ENCODE measurements at regions of chr3 and their contacts with region 1.

Region 1: DNA sequence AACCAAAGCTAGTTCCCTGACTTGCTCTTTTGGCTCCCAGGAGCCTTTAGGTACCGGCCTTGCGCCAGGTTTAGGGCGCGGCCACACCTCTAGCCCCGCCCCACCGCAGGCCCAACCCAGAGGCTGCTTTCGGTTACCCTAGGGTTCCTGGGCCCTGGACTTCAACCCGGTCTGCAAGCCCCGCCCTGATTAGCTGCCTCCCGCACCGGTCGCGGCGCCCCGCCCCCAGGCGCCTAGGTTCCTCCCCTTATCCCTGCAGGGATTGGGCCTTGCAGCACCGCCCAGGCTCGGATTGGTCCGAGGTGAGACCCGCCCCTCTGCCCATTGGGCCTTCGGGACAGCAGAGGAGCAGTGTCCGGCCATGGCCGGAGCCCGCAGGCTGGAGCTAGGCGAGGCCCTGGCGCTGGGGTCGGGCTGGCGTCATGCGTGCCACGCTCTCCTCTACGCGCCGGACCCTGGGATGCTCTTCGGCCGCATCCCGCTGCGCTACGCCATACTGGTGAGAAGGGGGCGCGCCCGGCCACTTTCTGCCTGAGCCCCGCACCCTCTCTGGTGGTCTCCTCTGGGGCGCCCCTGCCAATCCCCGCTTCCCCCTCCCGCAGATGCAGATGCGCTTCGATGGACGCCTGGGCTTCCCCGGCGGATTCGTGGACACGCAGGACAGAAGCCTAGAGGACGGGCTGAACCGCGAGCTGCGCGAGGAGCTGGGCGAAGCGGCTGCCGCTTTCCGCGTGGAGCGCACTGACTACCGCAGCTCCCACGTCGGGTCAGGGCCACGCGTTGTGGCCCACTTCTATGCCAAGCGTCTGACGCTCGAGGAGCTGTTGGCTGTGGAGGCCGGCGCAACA is at the start of gene NUDT16:
- DNase-seq: peak; percentile 91 to 98 (median 96)
- ATAC-seq: peak; percentile 96
- H3K4me3 ChIP-seq: peak within 1 kb of the TSS; percentile 98
- H3K4me3 Mint-ChIP-seq: peak within 1 kb of the TSS; percentile 98
- H3K27ac ChIP-seq: peak within 1 kb of the TSS in 1 of 2 donors; percentile 11
- H3K27ac Mint-ChIP-seq: peak within 1 kb of the TSS; percentile 91
- H3K4me1 ChIP-seq: peaks cover 36% of the 10 kb centered on the region
- H3K4me1 Mint-ChIP-seq: peaks cover 48% of the 10 kb centered on the region
- H3K27me3 ChIP-seq: no peaks in the 10 kb centered on the region
- H3K27me3 Mint-ChIP-seq: no peaks in the 10 kb centered on the region
- CTCF ChIP-seq: peak; percentile 14
- total RNA-seq, gene NUDT16: 4.7 to 5.7 TPM

Region 2: DNA sequence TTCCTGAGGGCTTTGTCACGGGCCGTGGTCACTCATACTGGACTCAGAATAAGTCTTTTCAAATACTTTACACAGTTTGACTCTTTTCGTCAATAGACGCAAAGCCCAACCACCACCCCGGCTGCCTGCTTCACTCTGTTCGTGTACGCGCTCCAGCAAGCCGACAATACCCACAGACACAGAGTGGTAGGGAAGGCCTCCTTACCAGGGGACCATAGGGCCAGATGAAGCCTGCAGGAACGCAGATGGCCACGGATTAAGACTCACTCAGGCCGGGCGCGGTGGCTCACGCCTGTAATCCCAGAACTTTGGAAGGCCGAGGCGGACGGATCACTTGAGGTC is 1982.9 kb before region 1 on chr3:
- CTCF ChIA-PET with region 1: no interaction called
- POLR2A ChIA-PET with region 1: no interaction called
- intact Hi-C with region 1: no loop called
- DNase-seq: peak in 8 of 14 experiments; percentile 1 to 41 (median 10)
- ATAC-seq: peak; percentile 47
- H3K4me3 ChIP-seq: peak overlapping the region; percentile 82
- H3K4me3 Mint-ChIP-seq: peak overlapping the region; percentile 91
- H3K27ac ChIP-seq: peak overlapping the region; percentile 68 to 97
- H3K27ac Mint-ChIP-seq: peak overlapping the region; percentile 94
- H3K4me1 ChIP-seq: peaks cover 27% of the 10 kb centered on the region
- H3K4me1 Mint-ChIP-seq: peaks cover 38% of the 10 kb centered on the region
- H3K27me3 ChIP-seq: no peaks in the 10 kb centered on the region
- H3K27me3 Mint-ChIP-seq: no peaks in the 10 kb centered on the region
- CTCF ChIP-seq: no peak

Region 3: GRCh38 chr3:129503471-129504291 is 1878.0 kb before region 1 on chr3:
- CTCF ChIA-PET with region 1: no interaction called
- POLR2A ChIA-PET with region 1: no interaction called
- intact Hi-C with region 1: no loop called
- DNase-seq: no peak
- ATAC-seq: no peak
- H3K4me3 ChIP-seq: no peak overlapping the region
- H3K4me3 Mint-ChIP-seq: no peak overlapping the region
- H3K27ac ChIP-seq: no peak overlapping the region
- H3K27ac Mint-ChIP-seq: no peak overlapping the region
- H3K4me1 ChIP-seq: no peaks in the 10 kb centered on the region
- H3K4me1 Mint-ChIP-seq: no peaks in the 10 kb centered on the region
- H3K27me3 ChIP-seq: no peaks in the 10 kb centered on the region
- H3K27me3 Mint-ChIP-seq: no peaks in the 10 kb centered on the region
- CTCF ChIP-seq: no peak

Region 4: DNA sequence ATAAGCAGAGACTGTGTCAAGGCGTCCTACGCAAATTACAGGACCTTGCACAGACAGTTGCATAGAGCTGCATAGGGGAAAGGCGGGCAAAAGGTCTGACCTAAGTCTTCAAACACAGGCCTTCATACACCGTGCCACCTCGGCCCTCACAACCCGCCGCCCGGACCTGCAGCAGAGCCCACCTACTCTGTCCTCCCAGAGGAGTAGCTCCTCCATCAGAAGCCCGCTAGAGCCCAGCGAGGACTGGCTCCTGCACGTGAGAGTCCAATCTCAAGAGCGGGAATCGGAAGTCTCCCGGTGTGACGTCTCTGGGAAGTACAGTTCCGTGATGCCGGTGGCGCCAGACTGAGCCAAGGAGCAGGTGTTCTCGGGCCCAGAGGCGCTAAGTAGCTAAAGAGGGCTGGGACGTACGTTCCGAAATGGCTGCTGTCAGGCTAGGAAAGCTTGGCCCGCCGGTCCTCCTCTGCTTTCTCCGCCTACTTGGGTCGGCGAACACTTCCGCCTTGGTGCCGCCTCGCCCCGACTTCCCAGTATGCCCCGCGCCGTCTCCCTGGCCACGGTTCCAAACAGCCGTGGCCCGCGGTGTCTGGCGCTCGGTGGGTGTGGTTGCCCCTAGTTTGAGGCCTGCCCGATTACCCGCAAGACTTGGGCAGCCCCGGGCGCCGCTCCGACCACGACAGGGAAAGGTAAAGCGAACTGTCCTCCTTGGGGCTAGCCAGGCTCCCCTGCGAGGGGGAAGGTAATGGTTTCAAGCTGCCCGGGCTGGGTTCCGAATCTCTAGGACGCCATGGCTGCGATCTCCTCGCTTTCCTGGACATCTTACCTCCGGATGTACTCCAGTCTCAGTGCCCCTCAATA is 355.1 kb before region 1 on chr3 and contains the starts of genes ASTE1 and NEK11:
- CTCF ChIA-PET with region 1: no interaction called
- POLR2A ChIA-PET with region 1: interaction called, 26 read pairs
- intact Hi-C with region 1: loop called (anchors 5 to 10 kb)
- DNase-seq: peak; percentile 85 to 96 (median 90)
- ATAC-seq: peak; percentile 97
- H3K4me3 ChIP-seq: peak within 1 kb of the TSS; percentile 66
- H3K4me3 Mint-ChIP-seq: peak within 1 kb of the TSS; percentile 93
- H3K27ac ChIP-seq: peak within 1 kb of the TSS; percentile 84 to 89
- H3K27ac Mint-ChIP-seq: peak within 1 kb of the TSS; percentile 94
- H3K4me1 ChIP-seq: peaks cover 30% of the 10 kb centered on the region
- H3K4me1 Mint-ChIP-seq: peaks cover 52% of the 10 kb centered on the region
- H3K27me3 ChIP-seq: no peaks in the 10 kb centered on the region
- H3K27me3 Mint-ChIP-seq: no peaks in the 10 kb centered on the region
- CTCF ChIP-seq: no peak
- total RNA-seq, gene ASTE1: 25.6 to 26.6 TPM
- total RNA-seq, gene NEK11: 1.6 to 4.2 TPM

Region 5: GRCh38 chr3:131216801-131217200 is 164.9 kb before region 1 on chr3:
- CTCF ChIA-PET with region 1: no interaction called
- POLR2A ChIA-PET with region 1: no interaction called
- intact Hi-C with region 1: no loop called
- DNase-seq: no peak
- ATAC-seq: no peak
- H3K4me3 ChIP-seq: no peak overlapping the region
- H3K4me3 Mint-ChIP-seq: no peak overlapping the region
- H3K27ac ChIP-seq: no peak overlapping the region
- H3K27ac Mint-ChIP-seq: no peak overlapping the region
- H3K4me1 ChIP-seq: no peaks in the 10 kb centered on the region
- H3K4me1 Mint-ChIP-seq: no peaks in the 10 kb centered on the region
- H3K27me3 ChIP-seq: no peaks in the 10 kb centered on the region
- H3K27me3 Mint-ChIP-seq: no peaks in the 10 kb centered on the region
- CTCF ChIP-seq: no peak

Region 6: GRCh38 chr3:131502530-131503245 is 121.0 kb after region 1 on chr3 and contains the start of gene MRPL3:
- CTCF ChIA-PET with region 1: no interaction called
- POLR2A ChIA-PET with region 1: interaction called, 4 read pairs
- intact Hi-C with region 1: loop called (anchors 2 to 10 kb)
- DNase-seq: peak; percentile 72 to 93 (median 78)
- ATAC-seq: peak; percentile 89
- H3K4me3 ChIP-seq: peak within 1 kb of the TSS; percentile 71
- H3K4me3 Mint-ChIP-seq: peak within 1 kb of the TSS; percentile 98
- H3K27ac ChIP-seq: peak within 1 kb of the TSS; percentile 66 to 76
- H3K27ac Mint-ChIP-seq: peak within 1 kb of the TSS; percentile 93
- H3K4me1 ChIP-seq: peaks cover 16% of the 10 kb centered on the region
- H3K4me1 Mint-ChIP-seq: peaks cover 54% of the 10 kb centered on the region
- H3K27me3 ChIP-seq: no peaks in the 10 kb centered on the region
- H3K27me3 Mint-ChIP-seq: no peaks in the 10 kb centered on the region
- CTCF ChIP-seq: no peak
- total RNA-seq, gene MRPL3: 36.0 to 37.6 TPM

Measured in CD4-positive, alpha-beta T cell (primary cell).